CD4-positive, alpha-beta memory T cell (primary cell): ENCODE measurements at regions of chr2 and their contacts with region 1.

Region 1: GRCh38 chr2:44955593-44956392 is 14.3 kb downstream of the SIX3 start:
- DNase-seq: peak; percentile 51 to 58 (median 57)
- H3K4me3 ChIP-seq: no peak overlapping the region
- H3K4me3 Mint-ChIP-seq: peak overlapping the region in 2 of 8 donors; percentile 6 to 76
- H3K27ac ChIP-seq: no peak overlapping the region
- H3K27ac Mint-ChIP-seq: no peak overlapping the region
- H3K4me1 ChIP-seq: peaks cover 13% of the 10 kb centered on the region
- H3K4me1 Mint-ChIP-seq: peaks cover 11 to 36% (median 24%) of the 10 kb centered on the region in 4 donors
- H3K27me3 ChIP-seq: peaks cover 9% of the 10 kb centered on the region
- H3K27me3 Mint-ChIP-seq: peaks cover 30 to 57% of the 10 kb centered on the region in 2 donors

Region 2: DNA sequence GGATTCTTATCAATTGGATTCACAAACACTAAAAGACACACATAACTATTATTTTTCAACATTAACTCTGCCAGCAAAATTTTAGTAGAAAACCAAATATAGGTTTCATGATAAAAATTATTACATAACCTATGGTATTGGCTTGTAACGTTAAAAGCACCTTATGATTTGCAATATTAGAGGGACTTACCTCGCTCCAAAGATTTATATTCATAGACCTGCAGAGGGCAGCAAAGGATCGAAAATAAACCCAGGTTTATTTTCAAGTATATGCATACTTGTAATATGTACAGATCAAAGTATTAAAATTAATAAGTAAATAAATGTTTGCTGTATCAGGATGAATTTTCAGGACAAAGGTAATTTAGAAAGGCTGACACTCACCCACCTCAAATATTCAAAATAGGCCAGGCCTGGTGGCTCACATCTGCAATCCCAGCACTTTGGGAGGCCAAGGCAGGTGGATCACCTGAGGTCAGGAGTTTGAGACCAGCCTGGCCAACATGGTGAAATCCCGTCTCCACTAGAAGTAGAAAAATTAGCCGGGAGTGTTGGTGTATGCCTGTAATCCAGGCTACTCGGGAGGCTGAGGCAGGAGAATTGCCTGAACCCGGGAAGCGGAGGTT is 1005.3 kb before region 1 on chr2:
- CTCF ChIA-PET with region 1: interaction called, 6 read pairs
- POLR2A ChIA-PET with region 1: no interaction called
- intact Hi-C with region 1: loop called (anchors 5 kb)
- DNase-seq: peak in 4 of 5 donors; percentile 11 to 30 (median 24)
- H3K4me3 ChIP-seq: no peak overlapping the region
- H3K4me3 Mint-ChIP-seq: no peak overlapping the region
- H3K27ac ChIP-seq: no peak overlapping the region
- H3K27ac Mint-ChIP-seq: peak overlapping the region in 1 of 7 donors; percentile 65
- H3K4me1 ChIP-seq: no peaks in the 10 kb centered on the region
- H3K4me1 Mint-ChIP-seq: peaks cover 0 to 2% (median 0%) of the 10 kb centered on the region in 4 donors
- H3K27me3 ChIP-seq: no peaks in the 10 kb centered on the region
- H3K27me3 Mint-ChIP-seq: no peaks in the 10 kb centered on the region

Region 3: DNA sequence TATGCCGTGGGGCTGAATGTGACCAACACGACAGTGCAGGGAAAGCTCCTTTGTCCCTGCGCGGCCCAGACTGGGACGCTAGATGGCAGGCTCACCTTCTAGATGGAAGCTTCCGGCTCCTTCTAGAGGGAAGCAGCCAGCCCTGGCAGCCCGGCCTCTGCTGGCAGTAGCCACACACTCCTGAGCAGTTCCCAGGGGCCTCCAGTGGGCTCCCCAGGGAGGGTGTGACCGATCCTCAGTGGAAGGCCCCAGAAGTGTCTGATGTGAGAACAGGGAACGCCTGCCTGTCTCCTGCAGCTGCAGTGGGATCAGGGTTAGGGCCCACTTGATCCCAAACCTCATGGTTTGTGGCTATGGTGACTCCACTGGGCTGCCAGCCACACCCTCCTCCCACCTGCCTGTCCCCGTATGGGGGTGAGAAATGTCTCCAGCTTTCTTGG is 911.5 kb before region 1 on chr2:
- CTCF ChIA-PET with region 1: interaction called, 13 read pairs
- POLR2A ChIA-PET with region 1: no interaction called
- intact Hi-C with region 1: no loop called
- DNase-seq: peak; percentile 60 to 68 (median 66)
- H3K4me3 ChIP-seq: no peak overlapping the region
- H3K4me3 Mint-ChIP-seq: peak overlapping the region in 1 of 8 donors; percentile 38
- H3K27ac ChIP-seq: no peak overlapping the region
- H3K27ac Mint-ChIP-seq: peak overlapping the region in 1 of 7 donors; percentile 14
- H3K4me1 ChIP-seq: peaks cover 6% of the 10 kb centered on the region
- H3K4me1 Mint-ChIP-seq: peaks cover 0 to 4% (median 2%) of the 10 kb centered on the region in 4 donors
- H3K27me3 ChIP-seq: no peaks in the 10 kb centered on the region
- H3K27me3 Mint-ChIP-seq: peaks cover 0 to 2% of the 10 kb centered on the region in 2 donors

Region 4: GRCh38 chr2:44392338-44392943 is 563.4 kb before region 1 on chr2:
- CTCF ChIA-PET with region 1: interaction called, 44 read pairs
- POLR2A ChIA-PET with region 1: no interaction called
- intact Hi-C with region 1: loop called (anchors 1 kb)
- DNase-seq: peak; percentile 3 to 30 (median 21)
- H3K4me3 ChIP-seq: no peak overlapping the region
- H3K4me3 Mint-ChIP-seq: no peak overlapping the region
- H3K27ac ChIP-seq: no peak overlapping the region
- H3K27ac Mint-ChIP-seq: no peak overlapping the region
- H3K4me1 ChIP-seq: no peaks in the 10 kb centered on the region
- H3K4me1 Mint-ChIP-seq: peaks cover 4 to 10% (median 6%) of the 10 kb centered on the region in 4 donors
- H3K27me3 ChIP-seq: no peaks in the 10 kb centered on the region
- H3K27me3 Mint-ChIP-seq: no peaks in the 10 kb centered on the region

Region 5: GRCh38 chr2:45014016-45014702 is 58.4 kb after region 1 on chr2:
- CTCF ChIA-PET with region 1: no interaction called
- POLR2A ChIA-PET with region 1: no interaction called
- intact Hi-C with region 1: no loop called
- DNase-seq: peak in 1 of 5 donors; percentile 4
- H3K4me3 ChIP-seq: no peak overlapping the region
- H3K4me3 Mint-ChIP-seq: peak overlapping the region in 6 of 8 donors; percentile 39 to 79 (median 56)
- H3K27ac ChIP-seq: no peak overlapping the region
- H3K27ac Mint-ChIP-seq: no peak overlapping the region
- H3K4me1 ChIP-seq: no peaks in the 10 kb centered on the region
- H3K4me1 Mint-ChIP-seq: peaks cover 0 to 27% (median 15%) of the 10 kb centered on the region in 4 donors
- H3K27me3 ChIP-seq: peaks cover 24% of the 10 kb centered on the region
- H3K27me3 Mint-ChIP-seq: peaks cover 55 to 67% of the 10 kb centered on the region in 2 donors